GM10248 (cell line): ENCODE measurements at regions of chr11 and their contacts with region 1.

Region 1: GRCh38 chr11:9775398-9775780 is 111.5 kb downstream of the SWAP70 start:
- DNase-seq: no peak
- CTCF ChIP-seq: no peak

Region 2: GRCh38 chr11:9757809-9758636 is 17.4 kb before region 1 on chr11:
- CTCF ChIA-PET with region 1: interaction called, 10 read pairs
- POLR2A ChIA-PET with region 1: no interaction called
- DNase-seq: peak; percentile 97
- CTCF ChIP-seq: peak; percentile 92